GM18951 (cell line): ENCODE measurements at regions of chr18 and their contacts with region 1.

Region 1: GRCh38 chr18:9971313-9971920 is 57.6 kb downstream of the VAPA start:
- POLR2A ChIP-seq: no peak

Region 2: GRCh38 chr18:10194605-10195004 is 223.2 kb after region 1 on chr18:
- in situ Hi-C with region 1: no loop called
- POLR2A ChIP-seq: no peak

Region 3: GRCh38 chr18:10530852-10531251 is 559.4 kb after region 1 on chr18:
- in situ Hi-C with region 1: loop called (anchors 5 kb)
- POLR2A ChIP-seq: no peak